PC-3 (cell line): ENCODE measurements at regions of chr14 and their contacts with region 1.

Region 1: DNA sequence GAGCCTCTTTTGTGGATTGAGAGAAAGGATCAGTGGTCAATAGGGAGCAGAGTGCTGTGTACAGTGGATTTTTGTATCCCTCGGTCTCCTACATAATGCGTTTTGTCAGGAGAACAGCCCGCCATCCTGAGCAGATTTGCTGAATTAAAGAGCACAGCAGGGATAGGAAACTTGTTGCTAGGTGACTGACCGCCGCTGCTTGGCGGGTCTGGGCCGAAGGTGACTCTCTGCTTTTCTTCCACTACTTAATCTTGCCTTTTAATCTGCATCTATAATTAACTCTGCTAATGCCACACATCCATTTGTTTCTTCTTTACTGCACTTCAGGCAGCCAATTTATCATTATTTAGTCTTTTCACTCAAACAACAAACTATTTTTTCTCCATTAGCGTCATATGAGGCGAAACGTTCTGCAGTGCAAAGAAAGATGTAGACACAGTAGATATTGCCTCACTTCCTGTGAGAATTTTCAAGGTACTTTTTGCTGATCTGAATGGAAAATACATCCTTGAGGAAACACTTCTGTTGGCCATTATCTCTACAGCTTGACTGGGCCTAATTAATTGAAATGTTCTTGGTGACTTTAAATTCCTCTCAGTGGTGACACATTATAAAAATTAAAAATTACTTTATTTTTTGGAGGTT is 108.0 kb downstream of the PPM1A start:
- DNase-seq: no peak
- ATAC-seq: no peak
- H3K4me3 ChIP-seq: no peak overlapping the region
- H3K27ac ChIP-seq: no peak overlapping the region
- H3K4me1 ChIP-seq: no peaks in the 10 kb centered on the region
- H3K27me3 ChIP-seq: peaks cover 22% of the 10 kb centered on the region
- CTCF ChIP-seq: no peak

Region 2: DNA sequence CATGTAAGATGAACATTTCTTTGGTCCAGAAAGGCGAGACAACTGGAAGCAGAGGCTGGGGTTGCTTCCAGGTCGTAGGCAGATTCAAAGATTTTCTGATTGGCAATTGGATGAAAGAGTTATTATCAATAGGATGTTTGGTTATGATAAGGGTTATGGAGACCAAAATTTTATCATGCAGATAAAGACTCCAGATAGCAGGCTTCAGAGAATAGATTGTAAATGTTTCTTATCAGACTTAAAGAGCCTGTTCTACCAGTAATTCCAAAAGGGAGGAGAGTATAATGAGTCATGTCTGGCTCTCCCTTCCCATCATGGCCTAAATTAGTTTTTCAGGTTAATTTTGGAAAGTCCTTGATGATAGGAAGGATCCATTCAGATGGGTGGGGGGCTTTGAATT is 73.2 kb after region 1 on chr14:
- CTCF ChIA-PET with region 1: no interaction called
- POLR2A ChIA-PET with region 1: no interaction called
- intact Hi-C with region 1: no loop called
- DNase-seq: no peak
- ATAC-seq: no peak
- H3K4me3 ChIP-seq: no peak overlapping the region
- H3K27ac ChIP-seq: no peak overlapping the region
- H3K4me1 ChIP-seq: no peaks in the 10 kb centered on the region
- H3K27me3 ChIP-seq: no peaks in the 10 kb centered on the region
- CTCF ChIP-seq: no peak

Region 3: DNA sequence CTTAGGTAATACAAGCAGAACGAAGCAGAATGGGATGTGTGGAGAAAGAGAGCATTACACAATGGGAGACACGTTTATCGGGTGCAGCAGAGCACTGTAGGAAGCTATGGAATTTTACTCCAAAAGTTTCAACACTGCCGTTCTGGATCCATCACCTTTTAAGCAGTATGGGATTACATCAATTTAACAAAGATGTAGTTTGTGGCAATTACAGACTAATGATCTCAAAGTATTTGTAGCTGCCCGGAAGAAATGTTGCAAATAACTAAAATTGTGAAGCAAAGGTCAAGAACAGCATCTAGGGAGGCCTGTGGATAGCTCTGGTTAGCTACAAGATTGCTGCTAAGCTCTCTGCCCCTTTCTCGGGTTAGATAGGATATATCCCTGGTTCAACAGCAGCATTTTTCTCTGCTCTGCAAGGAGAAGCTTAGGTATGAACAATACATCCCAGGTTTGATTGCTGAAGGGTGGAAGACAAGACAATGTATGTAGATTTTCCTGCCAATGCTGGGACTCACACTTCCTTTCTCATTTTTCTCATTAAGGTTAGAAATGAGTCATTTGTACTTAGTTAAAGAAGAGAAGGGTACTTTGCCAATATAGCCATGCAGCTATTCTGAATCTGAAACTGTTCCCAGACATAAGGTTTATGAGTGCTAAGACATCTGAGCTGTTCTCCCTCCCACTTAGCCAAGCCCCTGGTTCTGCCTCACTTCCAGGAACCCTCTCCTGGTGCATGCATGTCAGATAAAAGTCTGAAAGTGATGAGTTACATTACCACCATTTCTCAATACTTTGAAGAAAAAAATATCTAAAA is 1263.3 kb after region 1 on chr14:
- CTCF ChIA-PET with region 1: no interaction called
- POLR2A ChIA-PET with region 1: no interaction called
- intact Hi-C with region 1: loop called (anchors 5 kb)
- DNase-seq: peak; percentile 56
- ATAC-seq: peak; percentile 85
- H3K4me3 ChIP-seq: no peak overlapping the region
- H3K27ac ChIP-seq: peak overlapping the region; percentile 50
- H3K4me1 ChIP-seq: peaks cover 51% of the 10 kb centered on the region
- H3K27me3 ChIP-seq: no peaks in the 10 kb centered on the region
- CTCF ChIP-seq: no peak